ENCODE measurements at regions of chr11 and their contacts with region 1.

Region 1: GRCh38 chr11:68756171-68756766 is 4.9 kb upstream of the TESMIN start:
- DNase-seq: no peak
- H3K4me3 ChIP-seq: no peak overlapping the region
- CTCF ChIP-seq: no peak

Region 2: DNA sequence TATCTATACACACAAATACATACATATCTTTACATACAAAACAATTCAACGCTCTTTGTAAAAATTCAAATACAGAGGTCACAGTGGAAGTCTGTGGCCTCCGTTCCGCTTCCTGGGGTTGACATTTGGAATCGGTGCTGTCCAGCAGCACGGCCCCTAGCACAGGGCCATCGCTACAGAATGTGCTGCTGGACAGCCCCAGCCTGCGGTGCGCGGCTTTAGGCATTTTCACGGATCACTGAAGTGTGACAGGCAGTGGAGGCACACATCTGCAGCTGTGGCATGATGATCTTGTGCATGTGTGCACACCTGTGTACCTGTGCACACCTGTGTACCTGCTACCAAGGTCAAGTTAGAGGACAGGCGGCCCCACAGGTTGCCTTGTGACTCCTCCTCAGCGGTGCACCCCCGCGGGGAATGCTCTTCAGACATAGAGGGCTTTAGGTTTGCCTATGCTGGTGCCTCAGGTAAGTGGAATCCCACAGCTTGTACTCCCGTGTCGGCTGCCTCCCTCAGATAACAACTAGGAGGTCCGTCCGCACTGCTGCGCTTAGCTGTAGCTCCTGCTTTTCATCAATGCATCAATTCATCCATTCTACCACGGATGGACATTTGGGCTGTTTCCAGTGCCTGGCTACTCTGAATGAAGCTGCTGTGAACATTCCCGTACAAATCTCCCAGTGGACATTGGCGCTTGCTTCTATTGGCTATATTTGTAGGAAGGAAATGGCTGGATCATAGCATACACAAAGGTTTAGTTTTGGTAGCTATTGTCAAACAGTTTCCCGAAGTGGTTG is 42.0 kb before region 1 on chr11:
- in situ Hi-C with region 1: loop called (anchors 5 kb)
- DNase-seq: no peak
- H3K4me3 ChIP-seq: no peak overlapping the region
- CTCF ChIP-seq: no peak

Region 3: DNA sequence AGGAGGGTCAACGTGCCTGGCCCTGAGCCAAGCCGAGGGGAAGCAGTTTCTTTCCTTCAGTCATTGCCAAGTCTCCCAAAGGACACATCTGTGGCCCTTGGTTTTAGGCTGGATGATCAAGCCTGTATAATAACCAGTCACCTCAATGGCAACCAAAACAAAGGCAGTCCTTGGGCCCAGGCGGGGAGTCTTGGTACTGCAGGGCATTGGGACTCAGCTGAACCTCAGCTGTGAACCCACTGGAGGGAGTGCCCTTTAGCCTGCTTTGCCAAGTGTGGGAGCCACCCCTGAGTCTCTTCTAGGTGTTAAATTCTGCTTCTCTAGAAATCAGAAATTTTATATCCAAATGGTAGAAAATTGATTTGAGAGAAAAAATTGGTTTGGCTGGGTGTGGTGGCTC is 48.5 kb after region 1 on chr11:
- in situ Hi-C with region 1: loop called (anchors 5 kb)
- DNase-seq: no peak
- H3K4me3 ChIP-seq: no peak overlapping the region
- CTCF ChIP-seq: no peak